PC-3 (cell line): ENCODE measurements at regions of chr18 and their contacts with region 1.

Region 1: GRCh38 chr18:27839141-27839540 is 337.8 kb downstream of the CDH2 start:
- DNase-seq: peak; percentile 96
- ATAC-seq: peak; percentile 94
- H3K4me3 ChIP-seq: no peak overlapping the region
- H3K27ac ChIP-seq: peak overlapping the region; percentile 72
- H3K4me1 ChIP-seq: peaks cover 60% of the 10 kb centered on the region
- H3K27me3 ChIP-seq: no peaks in the 10 kb centered on the region
- CTCF ChIP-seq: no peak

Region 2: GRCh38 chr18:27605107-27605834 is 233.9 kb before region 1 on chr18:
- CTCF ChIA-PET with region 1: no interaction called
- POLR2A ChIA-PET with region 1: no interaction called
- intact Hi-C with region 1: loop called (anchors 10 kb)
- DNase-seq: peak; percentile 83
- ATAC-seq: peak; percentile 93
- H3K4me3 ChIP-seq: no peak overlapping the region
- H3K27ac ChIP-seq: no peak overlapping the region
- H3K4me1 ChIP-seq: peaks cover 11% of the 10 kb centered on the region
- H3K27me3 ChIP-seq: no peaks in the 10 kb centered on the region
- CTCF ChIP-seq: peak; percentile 87

Region 3: GRCh38 chr18:27860701-27861107 is 21.6 kb after region 1 on chr18:
- CTCF ChIA-PET with region 1: no interaction called
- POLR2A ChIA-PET with region 1: no interaction called
- intact Hi-C with region 1: no loop called
- DNase-seq: no peak
- ATAC-seq: no peak
- H3K4me3 ChIP-seq: no peak overlapping the region
- H3K27ac ChIP-seq: no peak overlapping the region
- H3K4me1 ChIP-seq: no peaks in the 10 kb centered on the region
- H3K27me3 ChIP-seq: no peaks in the 10 kb centered on the region
- CTCF ChIP-seq: no peak

Region 4: DNA sequence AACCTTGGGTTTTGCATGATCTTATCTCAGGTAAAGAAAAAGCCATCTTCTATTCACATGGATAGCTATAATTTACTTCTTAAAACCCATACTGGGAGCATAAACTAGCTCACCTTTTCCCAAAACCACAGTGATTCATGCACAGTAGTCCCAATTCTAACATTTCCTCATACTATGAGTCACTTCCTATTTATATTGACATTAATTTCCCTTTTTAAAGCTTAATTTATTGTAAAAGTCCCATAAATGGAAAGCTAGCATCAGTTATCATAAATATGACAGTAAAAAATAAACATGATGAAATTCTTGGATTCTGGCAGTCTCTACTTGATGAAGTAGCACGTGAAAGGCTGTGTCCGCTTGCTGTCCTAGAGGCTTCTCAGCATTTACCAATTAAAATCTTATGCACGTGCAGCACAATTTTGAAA is 157.7 kb after region 1 on chr18:
- CTCF ChIA-PET with region 1: no interaction called
- POLR2A ChIA-PET with region 1: no interaction called
- intact Hi-C with region 1: loop called (anchors 5 kb)
- DNase-seq: peak; percentile 83
- ATAC-seq: peak; percentile 92
- H3K4me3 ChIP-seq: no peak overlapping the region
- H3K27ac ChIP-seq: no peak overlapping the region
- H3K4me1 ChIP-seq: peaks cover 16% of the 10 kb centered on the region
- H3K27me3 ChIP-seq: no peaks in the 10 kb centered on the region
- CTCF ChIP-seq: no peak